AG04450 (cell line): ENCODE measurements at regions of chr12 and their contacts with region 1.

Region 1: GRCh38 chr12:122399592-122400373 is 22.7 kb downstream of the CLIP1 start:
- DNase-seq: peak; percentile 75
- H3K4me3 ChIP-seq: peak overlapping the region; percentile 24; the same call in 1 of the 2 replicates
- H3K27ac ChIP-seq: peak overlapping the region; percentile 99
- H3K27me3 ChIP-seq: no peaks in the 10 kb centered on the region
- CTCF ChIP-seq: peak; percentile 80

Region 2: DNA sequence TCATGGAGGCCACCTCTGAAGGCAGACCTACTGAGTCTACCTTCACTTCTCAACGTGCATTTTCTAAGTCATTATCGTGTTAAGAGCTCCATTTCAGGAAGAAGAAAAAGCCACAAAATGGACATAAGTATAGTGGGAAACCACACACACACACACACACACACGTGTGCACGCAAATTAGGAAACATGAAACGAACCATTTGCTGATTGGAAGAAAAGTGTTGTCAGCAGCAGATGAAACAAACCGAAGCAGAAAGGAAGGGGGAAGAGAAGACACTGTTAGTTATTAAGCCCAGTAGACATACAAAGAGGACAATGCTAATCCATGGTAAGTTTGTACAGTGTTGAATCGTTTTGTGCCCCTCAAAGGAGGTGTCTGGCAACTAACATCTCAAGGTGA is 123.5 kb before region 1 on chr12:
- CTCF ChIA-PET with region 1: no interaction called
- POLR2A ChIA-PET with region 1: no interaction called
- DNase-seq: no peak
- H3K4me3 ChIP-seq: no peak overlapping the region
- H3K27ac ChIP-seq: no peak overlapping the region
- H3K27me3 ChIP-seq: no peaks in the 10 kb centered on the region
- CTCF ChIP-seq: no peak

Region 3: GRCh38 chr12:122336015-122336946 is 63.5 kb before region 1 on chr12:
- CTCF ChIA-PET with region 1: interaction called, 10 read pairs
- POLR2A ChIA-PET with region 1: no interaction called
- DNase-seq: no peak
- H3K4me3 ChIP-seq: no peak overlapping the region
- H3K27ac ChIP-seq: no peak overlapping the region
- H3K27me3 ChIP-seq: no peaks in the 10 kb centered on the region
- CTCF ChIP-seq: peak; percentile 72

Region 4: DNA sequence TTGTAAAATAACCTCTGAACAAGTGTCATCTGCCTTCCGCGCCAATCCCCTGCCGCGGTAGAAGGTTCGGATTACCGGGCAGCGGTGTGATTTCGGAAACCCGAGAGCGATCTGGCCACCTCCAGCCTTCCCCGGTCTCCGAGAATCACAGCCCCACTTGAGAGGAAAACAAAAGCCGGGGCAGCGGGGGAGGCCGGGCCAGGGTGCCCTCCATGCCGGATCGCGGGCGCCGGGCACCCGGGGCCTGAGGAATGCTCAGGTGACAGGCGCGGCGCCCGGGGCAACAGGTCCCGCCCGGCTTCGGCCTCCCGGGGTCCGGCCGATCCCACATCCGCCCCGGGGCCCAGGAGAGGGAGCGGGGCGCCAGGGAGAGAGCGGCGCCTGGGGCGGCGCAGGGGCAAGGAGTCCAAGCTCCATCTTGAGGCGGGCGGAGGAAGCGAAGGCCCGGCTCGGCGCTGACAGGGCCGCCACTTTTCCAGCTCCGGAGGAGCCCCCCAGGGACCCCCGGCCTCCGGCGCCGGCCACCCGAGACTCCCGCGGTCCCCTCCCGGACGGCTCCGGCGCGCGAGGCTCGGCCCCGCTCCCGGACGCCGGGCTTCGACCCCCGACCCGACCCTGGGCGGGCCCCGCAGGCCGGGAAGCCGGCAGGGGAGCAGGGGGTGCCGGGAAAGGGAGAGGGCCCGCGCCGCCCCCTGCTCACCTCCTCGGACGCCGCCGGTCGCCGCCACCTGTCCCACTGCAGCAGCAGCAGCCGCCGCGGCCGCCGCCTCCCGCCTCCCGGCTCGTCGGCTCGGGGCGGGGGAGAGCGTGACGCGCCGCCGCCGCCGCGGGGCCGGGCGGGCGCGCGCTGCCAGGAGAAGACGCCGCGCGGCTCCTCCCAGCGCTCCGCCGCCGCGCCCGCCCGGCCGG is 22.3 kb after region 1 on chr12 and contains the start of gene CLIP1:
- CTCF ChIA-PET with region 1: interaction called, 7 read pairs
- POLR2A ChIA-PET with region 1: interaction called, 13 read pairs
- DNase-seq: no peak
- H3K4me3 ChIP-seq: peak within 1 kb of the TSS; percentile 80
- H3K27ac ChIP-seq: peak within 1 kb of the TSS; percentile 97
- H3K27me3 ChIP-seq: no peaks in the 10 kb centered on the region
- CTCF ChIP-seq: peak; percentile 46
- polyA plus RNA-seq, gene CLIP1: 62.0 and 63.6 TPM in 2 replicates

Region 5: GRCh38 chr12:122463806-122464205 is 64.0 kb after region 1 on chr12:
- CTCF ChIA-PET with region 1: interaction called, 10 read pairs
- POLR2A ChIA-PET with region 1: interaction called, 23 read pairs
- DNase-seq: no peak
- H3K4me3 ChIP-seq: no peak overlapping the region
- H3K27ac ChIP-seq: peak overlapping the region; percentile 80
- H3K27me3 ChIP-seq: no peaks in the 10 kb centered on the region
- CTCF ChIP-seq: no peak

Region 6: GRCh38 chr12:122526683-122527477 is 127.1 kb after region 1 on chr12 and contains the starts of genes KNTC1 and RSRC2:
- CTCF ChIA-PET with region 1: no interaction called
- POLR2A ChIA-PET with region 1: interaction called, 12 read pairs
- DNase-seq: peak; percentile 99
- H3K4me3 ChIP-seq: peak within 1 kb of the TSS; percentile 89
- H3K27ac ChIP-seq: peak within 1 kb of the TSS; percentile 100
- H3K27me3 ChIP-seq: no peaks in the 10 kb centered on the region
- CTCF ChIP-seq: no peak
- polyA plus RNA-seq, gene KNTC1: 6.1 and 10.0 TPM in 2 replicates
- polyA plus RNA-seq, gene RSRC2: 29.4 and 45.9 TPM in 2 replicates